BJ (cell line): ENCODE measurements at regions of chr11 and their contacts with region 1.

Region 1: GRCh38 chr11:75280227-75280701 is 39.7 kb downstream of the TPBGL start:
- DNase-seq: no peak
- H3K4me3 ChIP-seq: no peak overlapping the region
- H3K27me3 ChIP-seq: no peaks in the 10 kb centered on the region
- CTCF ChIP-seq: peak; percentile 92

Region 2: GRCh38 chr11:75035911-75036565 is 244.2 kb before region 1 on chr11:
- CTCF ChIA-PET with region 1: no interaction called
- POLR2A ChIA-PET with region 1: no interaction called
- DNase-seq: no peak
- H3K4me3 ChIP-seq: no peak overlapping the region
- H3K27me3 ChIP-seq: no peaks in the 10 kb centered on the region; the same call in 1 of the 2 replicates
- CTCF ChIP-seq: no peak

Region 3: GRCh38 chr11:75293903-75294302 is 13.6 kb after region 1 on chr11:
- CTCF ChIA-PET with region 1: interaction called, 36 read pairs
- POLR2A ChIA-PET with region 1: no interaction called
- DNase-seq: no peak
- H3K4me3 ChIP-seq: no peak overlapping the region
- H3K27me3 ChIP-seq: no peaks in the 10 kb centered on the region
- CTCF ChIP-seq: no peak

Region 4: DNA sequence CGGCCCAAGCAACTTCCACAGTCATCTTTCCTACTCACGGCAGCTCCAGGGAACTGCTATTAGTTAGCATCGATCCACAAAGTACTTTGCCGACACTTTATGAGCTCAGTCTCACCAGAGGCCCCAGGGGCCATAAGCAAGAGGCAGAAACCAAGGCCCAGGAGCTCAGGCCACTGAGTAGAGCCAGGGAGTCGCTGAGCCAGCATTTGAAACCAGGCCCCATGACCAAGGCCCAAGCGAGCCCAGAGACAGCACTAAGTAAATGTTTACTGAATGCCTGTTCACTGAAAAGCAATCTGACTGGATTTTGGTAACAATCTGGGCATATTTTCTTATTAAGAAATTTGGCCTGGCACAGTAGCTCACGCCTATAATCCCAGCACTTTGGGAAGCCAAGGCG is 27.9 kb after region 1 on chr11:
- CTCF ChIA-PET with region 1: interaction called, 16 read pairs
- POLR2A ChIA-PET with region 1: interaction called, 3 read pairs
- DNase-seq: no peak
- H3K4me3 ChIP-seq: no peak overlapping the region
- H3K27me3 ChIP-seq: no peaks in the 10 kb centered on the region
- CTCF ChIP-seq: no peak

Region 5: DNA sequence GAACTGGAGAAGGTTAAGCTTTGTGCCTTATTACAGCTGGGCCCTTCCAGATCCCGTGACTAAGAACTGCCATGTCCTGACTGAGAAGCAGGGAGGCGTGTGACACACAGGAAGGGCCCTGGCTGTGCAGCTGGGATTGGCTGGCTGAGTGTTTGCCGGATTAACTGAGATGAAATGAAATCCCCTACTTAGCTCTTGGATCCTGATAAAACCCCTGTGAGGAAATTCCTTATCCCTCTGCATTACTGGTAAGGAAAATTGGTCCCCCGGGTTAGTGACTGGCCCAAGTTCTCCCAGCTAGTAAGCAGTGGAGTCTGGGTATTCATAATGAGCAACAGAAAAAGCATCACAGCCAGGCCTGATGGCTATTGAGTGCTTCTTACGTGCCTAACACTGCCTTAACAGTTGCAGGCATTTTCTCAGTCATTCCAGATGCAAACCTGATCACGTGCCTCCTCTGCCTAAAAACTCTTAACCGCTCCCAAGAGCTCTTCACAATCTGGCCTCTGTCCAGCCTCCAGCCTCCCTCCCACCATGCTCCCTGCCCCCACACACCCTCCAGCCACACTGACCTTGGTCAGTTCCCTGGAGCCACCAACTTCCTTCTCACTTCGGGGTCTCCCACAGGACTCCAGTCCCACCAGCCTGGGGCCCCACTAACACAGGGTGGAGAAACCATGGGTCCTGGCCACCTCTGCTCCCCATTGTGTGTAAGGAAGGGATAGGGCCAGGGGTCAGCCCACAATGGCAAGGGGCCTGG is 33.4 kb after region 1 on chr11:
- CTCF ChIA-PET with region 1: interaction called, 16 read pairs
- POLR2A ChIA-PET with region 1: no interaction called
- DNase-seq: peak; percentile 47
- H3K4me3 ChIP-seq: no peak overlapping the region
- H3K27me3 ChIP-seq: no peaks in the 10 kb centered on the region
- CTCF ChIP-seq: no peak

Region 6: DNA sequence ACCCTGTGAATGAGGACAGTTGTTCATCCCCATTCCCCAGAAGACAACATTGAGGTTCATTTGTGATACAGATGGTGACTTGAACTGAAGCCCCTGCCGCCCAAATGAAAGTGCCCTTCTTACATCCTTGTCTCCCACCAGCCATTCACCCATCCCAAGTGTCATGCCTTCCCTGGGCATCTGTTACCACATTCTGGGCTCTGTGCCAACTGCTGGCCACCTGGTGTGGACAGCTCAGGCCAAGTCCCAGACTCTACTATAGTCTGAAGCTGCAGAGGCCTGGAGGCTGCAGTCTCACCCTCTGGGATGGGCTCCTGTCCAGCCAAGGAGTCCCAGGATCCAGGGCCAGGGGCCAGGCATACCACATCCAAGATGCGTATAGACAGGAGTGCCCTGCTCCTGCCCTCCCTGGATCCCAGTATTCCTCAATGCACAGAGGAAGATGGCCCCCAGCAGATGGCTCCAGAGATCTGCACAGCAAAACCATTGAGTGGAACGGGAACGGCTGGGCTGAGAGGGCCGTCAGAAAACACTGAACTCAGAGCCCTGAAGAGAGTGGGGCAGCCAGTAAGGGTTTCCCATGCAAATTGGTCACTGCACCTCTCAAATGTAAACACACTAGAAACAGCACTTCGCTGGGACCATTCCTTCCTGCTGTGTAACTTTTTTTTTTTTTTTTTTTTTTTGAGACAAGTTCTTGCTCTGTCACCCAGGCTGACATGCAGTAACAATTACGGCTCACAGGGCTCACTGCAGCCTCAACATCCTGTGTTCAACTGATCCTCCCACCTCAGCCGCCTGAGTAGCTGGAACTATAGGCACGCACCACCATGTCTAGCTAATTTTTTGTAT is 48.4 kb after region 1 on chr11:
- CTCF ChIA-PET with region 1: interaction called, 14 read pairs
- POLR2A ChIA-PET with region 1: no interaction called
- DNase-seq: no peak
- H3K4me3 ChIP-seq: no peak overlapping the region
- H3K27me3 ChIP-seq: no peaks in the 10 kb centered on the region
- CTCF ChIP-seq: peak; percentile 88

Region 7: DNA sequence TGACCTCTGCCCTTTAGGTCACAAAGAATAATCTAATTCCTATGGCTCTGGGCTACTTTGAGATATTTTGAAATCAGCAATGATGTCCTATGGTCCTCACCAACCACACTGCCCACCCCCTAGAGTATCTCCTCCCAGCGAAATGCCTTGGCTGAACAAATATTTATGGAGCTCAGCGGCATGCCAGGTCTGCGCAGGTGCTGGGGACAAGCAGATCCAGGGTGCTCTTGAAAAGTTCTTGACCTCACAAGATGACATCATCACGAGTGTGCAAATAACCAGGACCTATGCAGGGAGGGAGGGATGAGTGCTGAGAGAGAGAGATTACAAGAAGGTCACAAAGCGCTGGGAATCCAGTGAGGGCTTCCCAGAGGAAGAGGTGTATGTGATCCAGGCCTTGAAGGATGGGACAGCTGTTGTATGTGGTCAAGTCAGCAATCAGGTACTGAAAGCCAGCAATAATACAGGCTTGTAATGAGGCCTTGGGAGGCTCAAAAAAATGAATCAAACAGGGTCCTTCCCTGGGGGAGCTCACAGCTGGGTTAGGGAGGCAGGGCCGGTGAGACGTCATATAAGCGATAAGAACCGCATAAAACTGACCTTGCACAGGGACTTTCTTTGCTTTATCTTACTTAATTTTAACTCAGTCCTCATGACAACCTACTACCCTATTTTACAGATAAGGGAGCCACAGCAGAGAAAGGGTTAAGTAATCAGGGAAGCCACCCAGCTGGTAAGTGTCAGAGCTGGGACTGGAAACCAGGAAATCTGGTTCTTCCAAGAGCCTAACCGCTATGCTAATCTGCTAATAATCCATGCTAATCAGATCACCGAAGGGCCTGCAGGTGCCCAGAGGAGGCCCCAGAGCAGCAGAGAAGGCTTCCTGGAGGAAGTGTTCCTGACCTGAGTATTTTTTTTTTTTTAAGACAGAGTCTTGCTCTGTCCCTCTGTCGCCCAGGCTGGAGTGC is 62.9 kb after region 1 on chr11:
- CTCF ChIA-PET with region 1: interaction called, 13 read pairs
- POLR2A ChIA-PET with region 1: no interaction called
- DNase-seq: no peak
- H3K4me3 ChIP-seq: no peak overlapping the region
- H3K27me3 ChIP-seq: no peaks in the 10 kb centered on the region
- CTCF ChIP-seq: no peak